Ascending aorta (tissue), 2 donors: ENCODE measurements at regions of chr2 and their contacts with region 1.

Region 1: GRCh38 chr2:209334198-209335017 is 89.4 kb upstream of the MAP2 start:
- DNase-seq: peak in 1 of 2 donors; percentile 70
- H3K4me3 ChIP-seq: no peak overlapping the region
- H3K27ac ChIP-seq: no peak overlapping the region
- H3K4me1 ChIP-seq: no peaks in the 10 kb centered on the region
- H3K27me3 ChIP-seq: no peaks in the 10 kb centered on the region
- CTCF ChIP-seq: peak; percentile 63 to 92 (median 90)

Region 2: GRCh38 chr2:209556354-209556961 is 222.1 kb after region 1 on chr2:
- intact Hi-C with region 1: loop called (anchors 1 kb)
- DNase-seq: no peak
- H3K4me3 ChIP-seq: no peak overlapping the region
- H3K27ac ChIP-seq: no peak overlapping the region
- H3K4me1 ChIP-seq: no peaks in the 10 kb centered on the region
- H3K27me3 ChIP-seq: no peaks in the 10 kb centered on the region
- CTCF ChIP-seq: peak; percentile 19 to 61 (median 53)

Region 3: DNA sequence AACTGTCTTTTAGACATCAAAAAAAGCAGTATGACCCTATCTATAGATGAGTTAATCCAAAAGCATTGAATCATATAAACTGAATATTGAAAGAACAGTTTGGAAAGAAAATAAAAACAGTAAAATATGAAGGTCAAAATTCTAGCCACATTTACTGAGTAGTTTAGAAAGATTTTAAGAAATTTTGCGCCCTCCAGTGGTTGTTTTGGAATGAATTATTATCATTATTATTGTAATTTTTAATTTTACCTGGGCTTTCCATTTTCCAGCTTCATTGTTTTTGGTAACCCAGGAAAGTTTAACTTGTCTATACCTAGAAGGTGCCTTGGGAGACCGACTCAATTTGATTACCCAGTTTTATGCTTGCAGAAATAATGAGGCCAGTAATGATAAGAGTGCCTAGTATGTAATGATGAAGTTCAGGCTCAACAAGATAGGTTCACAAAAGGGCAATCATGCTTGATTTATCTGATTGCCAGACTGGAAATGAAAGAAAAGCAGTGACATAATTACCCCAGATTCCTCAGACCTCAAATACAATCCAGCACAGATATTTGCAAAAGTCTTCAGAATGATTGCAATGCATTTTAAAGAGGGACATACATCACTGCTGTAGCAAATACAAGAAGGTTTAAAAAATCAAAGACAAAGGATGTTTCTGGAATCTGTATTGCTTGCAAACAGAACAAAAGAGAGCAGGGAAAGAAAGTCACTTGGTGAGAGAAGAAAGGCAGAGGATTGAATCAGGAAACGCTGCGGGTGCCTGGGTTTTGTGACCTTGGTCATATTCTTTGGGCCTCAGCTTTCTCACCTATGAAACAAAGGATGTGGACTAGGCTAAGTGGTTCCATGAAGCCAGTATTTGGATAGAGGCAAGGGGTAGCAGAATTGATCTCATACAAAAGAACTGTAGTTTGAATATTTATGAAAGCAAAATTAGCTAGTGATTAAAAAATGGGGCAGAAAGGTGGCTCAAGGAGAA is 243.3 kb after region 1 on chr2:
- intact Hi-C with region 1: loop called (anchors 2 kb)
- DNase-seq: no peak
- H3K4me3 ChIP-seq: no peak overlapping the region
- H3K27ac ChIP-seq: no peak overlapping the region
- H3K4me1 ChIP-seq: no peaks in the 10 kb centered on the region
- H3K27me3 ChIP-seq: no peaks in the 10 kb centered on the region
- CTCF ChIP-seq: peak in 2 of 3 experiments; percentile 21 to 48

Region 4: GRCh38 chr2:209960676-209961630 is 626.5 kb after region 1 on chr2:
- intact Hi-C with region 1: loop called (anchors 5 kb)
- DNase-seq: peak in 1 of 2 donors; percentile 64
- H3K4me3 ChIP-seq: no peak overlapping the region
- H3K27ac ChIP-seq: no peak overlapping the region
- H3K4me1 ChIP-seq: no peaks in the 10 kb centered on the region
- H3K27me3 ChIP-seq: no peaks in the 10 kb centered on the region
- CTCF ChIP-seq: peak in 2 of 3 experiments; percentile 48 to 57